Activated T-helper 1 cell treated with anti-CD3 and anti-CD28 coated beads, Interleukin-12 subunit alpha, Interleukin-12 subunit beta, Interleukin-2, Interleukin-4 antibody, amounts not matched to agents 30 ng/mL and 10 ng/mL and 1 ng/mL, durations not matched to agents 14 hours and 24 hours and 36 hours (primary cell): ENCODE measurements at regions of chr7 and their contacts with region 1.

Region 1: DNA sequence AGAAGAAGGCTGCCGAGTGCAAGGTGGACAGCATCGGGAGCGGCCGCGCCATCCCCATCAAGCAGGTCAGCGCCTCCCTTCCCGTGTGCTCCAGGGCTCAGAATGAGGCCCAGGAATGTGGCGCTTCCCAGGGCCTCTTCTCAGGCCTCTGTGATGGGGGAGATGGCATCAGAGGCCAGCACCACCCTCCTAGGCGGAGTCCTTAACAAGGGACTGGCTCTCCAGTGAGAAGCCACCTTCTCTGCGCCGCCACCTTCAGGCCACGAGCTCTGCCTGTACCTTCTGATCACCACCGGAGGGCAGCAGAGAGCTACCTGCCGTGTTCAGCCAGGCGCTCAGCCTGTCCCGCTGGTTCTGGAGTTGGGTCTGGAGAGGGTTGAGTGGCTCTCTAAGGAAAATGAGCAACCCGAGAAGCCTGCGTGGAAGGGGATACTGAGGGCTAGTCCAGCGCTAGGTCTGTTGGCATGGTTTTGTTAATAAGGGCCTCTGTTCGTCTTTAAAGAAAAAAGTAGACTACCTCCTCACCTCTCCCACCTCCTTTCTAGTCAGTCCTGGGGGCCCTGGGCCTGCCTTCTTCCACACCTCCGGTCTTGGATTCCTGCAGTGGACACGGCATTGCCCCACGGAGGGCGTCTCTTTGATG is 37.7 kb downstream of the AGAP3 start:
- DNase-seq: peak; percentile 71
- H3K4me3 Mint-ChIP-seq: no peak overlapping the region
- H3K27ac Mint-ChIP-seq: no peak overlapping the region
- H3K4me1 Mint-ChIP-seq: no peaks in the 10 kb centered on the region
- H3K27me3 Mint-ChIP-seq: no peaks in the 10 kb centered on the region

Region 2: DNA sequence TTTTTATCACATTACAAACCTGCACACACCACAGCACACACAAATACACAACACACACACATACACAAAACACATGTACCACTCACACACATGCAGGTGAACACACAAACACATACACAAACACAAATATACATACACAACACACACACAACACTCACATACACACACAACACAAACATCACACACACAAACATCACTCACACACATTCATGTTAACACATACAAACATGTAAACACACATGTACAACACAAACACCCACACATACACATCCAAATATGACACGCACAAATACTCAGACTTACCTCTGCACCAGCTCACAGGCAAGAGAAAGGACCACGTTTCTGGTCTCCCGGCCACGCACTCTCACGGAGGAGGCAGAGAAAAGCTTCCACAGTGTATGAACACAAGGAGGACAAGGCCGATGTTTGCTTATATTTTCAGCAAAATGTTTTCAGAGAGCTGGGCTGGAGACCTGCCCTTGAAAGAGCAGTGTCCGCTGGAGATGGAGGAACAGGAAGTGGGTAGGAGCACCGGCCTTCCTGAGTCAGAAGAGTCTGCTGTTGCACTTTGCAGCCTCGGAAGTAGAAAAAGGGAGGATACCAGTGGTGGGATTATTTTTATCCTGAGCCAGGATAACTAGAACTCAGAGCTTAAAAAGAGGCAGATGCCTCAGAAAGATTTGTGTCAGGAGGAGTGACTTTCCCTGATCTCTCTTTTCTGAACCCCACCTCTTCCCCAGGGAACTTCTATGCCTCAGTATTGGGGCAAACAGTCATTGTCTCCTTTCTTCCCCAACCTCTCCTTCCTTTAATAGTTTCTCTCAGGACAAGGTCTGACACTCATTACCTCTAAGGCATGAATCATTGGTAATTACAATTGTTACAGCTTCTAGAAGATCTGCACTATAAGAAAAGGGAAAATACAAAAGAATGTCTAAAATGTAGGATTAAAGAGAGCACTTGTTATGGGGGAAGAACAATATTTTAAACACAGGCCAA is 491.8 kb before region 1 on chr7 and contains the start of gene GIMAP6:
- intact Hi-C with region 1: no loop called
- DNase-seq: peak; percentile 48
- H3K4me3 Mint-ChIP-seq: peak within 1 kb of the TSS; percentile 94
- H3K27ac Mint-ChIP-seq: peak within 1 kb of the TSS; percentile 94
- H3K4me1 Mint-ChIP-seq: peaks cover 68% of the 10 kb centered on the region
- H3K27me3 Mint-ChIP-seq: no peaks in the 10 kb centered on the region
- total RNA-seq, gene GIMAP6: 38.7 and 41.3 TPM in 2 replicates

Region 3: GRCh38 chr7:151244196-151244840 is 120.4 kb after region 1 on chr7:
- intact Hi-C with region 1: loop called (anchors 1 kb)
- DNase-seq: peak; percentile 49
- H3K4me3 Mint-ChIP-seq: peak overlapping the region; percentile 49
- H3K27ac Mint-ChIP-seq: no peak overlapping the region
- H3K4me1 Mint-ChIP-seq: peaks cover 26% of the 10 kb centered on the region
- H3K27me3 Mint-ChIP-seq: peaks cover 32% of the 10 kb centered on the region